Gastrocnemius medialis (tissue), 4 donors: ENCODE measurements at regions of chr13 and their contacts with region 1.

Region 1: DNA sequence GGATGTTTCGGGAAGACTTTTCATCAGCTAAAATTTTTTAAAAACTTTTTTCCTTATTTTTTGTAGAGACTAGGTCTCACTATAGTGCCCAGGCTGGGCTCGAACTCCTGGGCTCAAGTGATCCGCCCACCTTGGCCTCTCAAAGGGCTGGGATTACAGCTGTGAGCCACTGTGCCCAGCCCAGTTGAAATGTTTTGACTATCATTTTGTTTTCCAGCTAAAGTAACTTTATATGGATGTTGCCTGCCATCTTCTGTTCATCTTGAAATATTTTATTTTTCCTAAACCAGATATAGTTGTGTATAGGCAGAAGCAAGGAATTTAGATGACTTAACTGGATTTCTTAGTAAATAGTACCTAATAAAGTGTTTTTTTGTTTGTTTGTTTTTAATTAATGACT is 7.0 kb downstream of the CAB39L start:
- DNase-seq: peak in 1 of 2 donors; percentile 28
- ATAC-seq: peak; percentile 72 to 77
- H3K4me3 ChIP-seq: no peak overlapping the region
- H3K27ac ChIP-seq: no peak overlapping the region
- H3K4me1 ChIP-seq: no peaks in the 10 kb centered on the region
- H3K27me3 ChIP-seq: no peaks in the 10 kb centered on the region
- CTCF ChIP-seq: no peak
- POLR2A ChIP-seq: no peak

Region 2: DNA sequence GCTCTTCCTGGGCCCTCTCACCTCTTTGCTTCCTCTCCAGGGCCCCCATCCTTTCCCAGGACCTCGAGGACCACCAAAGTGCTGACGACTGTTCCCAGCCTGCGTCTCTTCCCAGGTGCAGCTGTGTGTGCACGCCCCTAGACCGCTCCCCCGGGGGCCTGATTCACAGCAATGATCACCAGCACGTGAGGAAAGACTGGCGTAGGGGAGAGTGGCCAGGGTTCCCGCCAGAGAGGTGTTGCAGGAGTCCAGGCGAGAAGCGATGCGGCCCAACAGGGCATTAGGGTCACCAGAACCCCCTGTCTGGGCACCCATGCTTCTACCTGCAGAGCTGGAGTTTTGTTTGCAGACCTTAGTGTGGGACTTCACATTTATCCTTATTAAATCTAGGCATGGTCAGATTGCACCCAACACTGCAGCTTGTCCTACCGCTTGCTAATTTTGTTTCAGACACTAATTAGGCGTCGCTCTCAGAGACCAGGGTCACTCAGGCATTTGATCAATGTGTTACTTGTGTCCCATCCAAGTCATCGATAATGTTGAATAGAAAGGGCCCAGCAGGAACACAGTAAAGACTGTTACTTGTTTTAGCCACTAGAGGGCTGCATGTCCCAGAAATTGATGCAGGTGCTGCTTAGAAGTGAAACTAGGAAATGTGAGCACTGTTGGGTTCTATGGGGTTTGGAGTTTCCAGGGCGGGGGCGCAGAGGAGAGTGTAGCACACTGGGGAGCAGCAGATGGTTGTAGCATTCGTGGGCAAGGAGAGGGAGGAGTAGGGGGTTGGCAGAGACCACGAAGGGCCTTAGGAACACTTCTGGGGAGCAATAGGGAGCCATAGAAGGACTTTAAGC is 135.9 kb before region 1 on chr13:
- in situ Hi-C with region 1: loop called in 2 of 4 experiments (anchors 5 to 10 kb)
- intact Hi-C with region 1: loop called (anchors 1 kb)
- DNase-seq: peak in 1 of 2 donors; percentile 36
- ATAC-seq: peak; percentile 87 to 89
- H3K4me3 ChIP-seq: peak overlapping the region; percentile 27 to 48 (median 36)
- H3K27ac ChIP-seq: peak overlapping the region in 3 of 4 donors; percentile 14 to 24 (median 20)
- H3K4me1 ChIP-seq: no peaks in the 10 kb centered on the region
- H3K27me3 ChIP-seq: no peaks in the 10 kb centered on the region
- CTCF ChIP-seq: peak; percentile 76 to 85 (median 82)
- POLR2A ChIP-seq: no peak

Region 3: DNA sequence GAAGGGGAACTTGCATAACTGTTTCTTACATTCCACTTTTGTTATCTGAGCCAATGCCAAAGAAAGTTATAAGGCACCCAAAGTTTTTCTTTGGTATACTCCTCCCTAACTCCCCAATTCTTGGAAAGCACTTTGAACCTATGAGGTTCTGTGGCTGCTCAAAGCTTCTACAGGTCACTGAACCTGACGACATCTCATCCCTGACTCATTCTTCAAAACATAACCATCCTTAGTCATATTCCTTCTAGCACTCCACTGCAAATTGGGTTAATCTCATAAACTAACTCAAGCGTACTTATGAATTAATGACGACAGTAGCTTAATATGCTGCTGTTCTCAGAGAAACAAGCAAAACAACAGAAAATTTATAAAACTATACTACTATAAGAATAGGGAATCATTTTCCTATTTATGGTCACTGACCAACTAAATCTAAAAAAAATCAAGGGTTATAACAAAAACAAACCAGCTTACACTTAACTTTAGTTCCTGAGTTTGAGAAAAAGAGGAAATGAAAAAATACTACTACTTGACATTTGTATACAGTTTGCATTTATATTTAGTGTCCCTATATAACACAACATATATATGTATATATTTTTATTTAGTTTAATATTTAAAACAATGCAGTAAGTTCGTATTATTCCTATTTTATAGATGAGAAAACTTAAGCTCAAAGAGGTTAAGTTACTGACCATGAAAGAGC is 62.2 kb before region 1 on chr13:
- in situ Hi-C with region 1: no loop called
- intact Hi-C with region 1: no loop called
- DNase-seq: no peak
- ATAC-seq: no peak
- H3K4me3 ChIP-seq: no peak overlapping the region
- H3K27ac ChIP-seq: no peak overlapping the region
- H3K4me1 ChIP-seq: no peaks in the 10 kb centered on the region
- H3K27me3 ChIP-seq: no peaks in the 10 kb centered on the region
- CTCF ChIP-seq: no peak
- POLR2A ChIP-seq: no peak